Heart right ventricle (tissue), 16 donors: ENCODE measurements at regions of chr10 and their contacts with region 1.

Region 1: GRCh38 chr10:79195091-79195923 is 126.5 kb downstream of the ZMIZ1 start:
- DNase-seq: peak; percentile 86 to 87
- ATAC-seq: peak; percentile 76 to 92 (median 86)
- H3K4me3 ChIP-seq: peak overlapping the region in 1 of 10 donors; percentile 19
- H3K27ac ChIP-seq: peak overlapping the region; percentile 45 to 85 (median 66)
- H3K4me1 ChIP-seq: peaks cover 39 to 69% (median 50%) of the 10 kb centered on the region in 9 donors
- H3K27me3 ChIP-seq: no peaks in the 10 kb centered on the region
- CTCF ChIP-seq: peak; percentile 96 to 98 (median 97)

Region 2: DNA sequence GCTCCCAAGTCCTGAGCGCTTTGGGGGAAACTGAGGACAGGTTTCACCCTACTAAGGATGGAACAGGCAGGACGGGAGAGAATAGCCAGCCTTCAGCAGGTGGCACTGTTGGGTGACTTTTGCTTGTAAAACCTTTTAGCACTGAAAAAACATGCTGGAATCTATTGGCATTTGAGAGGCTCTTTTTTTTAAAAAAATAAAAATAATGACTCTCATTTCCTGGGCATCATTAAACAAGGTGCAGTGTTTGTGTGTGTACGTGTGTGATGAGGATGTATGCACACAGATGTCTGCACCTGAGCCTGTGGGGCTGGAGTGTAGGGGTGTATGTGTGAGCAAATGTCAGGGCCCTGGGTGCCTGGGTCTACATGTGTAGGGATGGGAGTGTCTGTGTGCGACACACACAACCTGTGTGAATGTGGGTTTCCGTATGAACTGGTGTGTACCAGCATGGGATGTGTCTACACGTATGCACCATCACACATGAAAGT is 983.7 kb before region 1 on chr10:
- intact Hi-C with region 1: loop called (anchors 5 to 10 kb)
- DNase-seq: peak in 1 of 2 donors; percentile 39
- ATAC-seq: peak in 5 of 8 donors; percentile 1 to 40 (median 9)
- H3K4me3 ChIP-seq: no peak overlapping the region
- H3K27ac ChIP-seq: peak overlapping the region in 4 of 10 donors; percentile 1 to 56 (median 12)
- H3K4me1 ChIP-seq: peaks cover 20 to 40% (median 25%) of the 10 kb centered on the region in 9 donors
- H3K27me3 ChIP-seq: no peaks in the 10 kb centered on the region
- CTCF ChIP-seq: peak; percentile 19 to 66 (median 51)

Region 3: GRCh38 chr10:78599081-78599853 is 596.0 kb before region 1 on chr10:
- intact Hi-C with region 1: loop called in 1 of 10 experiments (anchors 10 kb)
- DNase-seq: no peak
- ATAC-seq: no peak
- H3K4me3 ChIP-seq: no peak overlapping the region
- H3K27ac ChIP-seq: no peak overlapping the region
- H3K4me1 ChIP-seq: peaks cover 0 to 6% (median 0%) of the 10 kb centered on the region in 9 donors
- H3K27me3 ChIP-seq: peaks cover 0 to 4% (median 0%) of the 10 kb centered on the region in 7 donors
- CTCF ChIP-seq: no peak

Region 4: GRCh38 chr10:78777466-78777865 is 417.8 kb before region 1 on chr10:
- intact Hi-C with region 1: loop called in 1 of 10 experiments (anchors 10 kb)
- DNase-seq: peak; percentile 57 to 73
- ATAC-seq: peak; percentile 74 to 89 (median 83)
- H3K4me3 ChIP-seq: no peak overlapping the region
- H3K27ac ChIP-seq: peak overlapping the region; percentile 20 to 91 (median 78)
- H3K4me1 ChIP-seq: peaks cover 13 to 59% (median 32%) of the 10 kb centered on the region in 9 donors
- H3K27me3 ChIP-seq: no peaks in the 10 kb centered on the region
- CTCF ChIP-seq: peak in 1 of 9 donors; percentile 20

Region 5: GRCh38 chr10:78869508-78870454 is 325.5 kb before region 1 on chr10:
- intact Hi-C with region 1: no loop called
- DNase-seq: no peak
- ATAC-seq: no peak
- H3K4me3 ChIP-seq: no peak overlapping the region
- H3K27ac ChIP-seq: no peak overlapping the region
- H3K4me1 ChIP-seq: peaks cover 0 to 8% (median 0%) of the 10 kb centered on the region in 9 donors
- H3K27me3 ChIP-seq: peaks cover 0 to 15% (median 0%) of the 10 kb centered on the region in 7 donors
- CTCF ChIP-seq: no peak

Region 6: GRCh38 chr10:78931321-78932053 is 263.8 kb before region 1 on chr10:
- intact Hi-C with region 1: loop called in 1 of 10 experiments (anchors 10 kb)
- DNase-seq: peak; percentile 43 to 54
- ATAC-seq: peak; percentile 21 to 85 (median 76)
- H3K4me3 ChIP-seq: no peak overlapping the region
- H3K27ac ChIP-seq: peak overlapping the region in 8 of 10 donors; percentile 28 to 76 (median 57)
- H3K4me1 ChIP-seq: peaks cover 0 to 33% (median 15%) of the 10 kb centered on the region in 9 donors
- H3K27me3 ChIP-seq: no peaks in the 10 kb centered on the region
- CTCF ChIP-seq: no peak

Region 7: DNA sequence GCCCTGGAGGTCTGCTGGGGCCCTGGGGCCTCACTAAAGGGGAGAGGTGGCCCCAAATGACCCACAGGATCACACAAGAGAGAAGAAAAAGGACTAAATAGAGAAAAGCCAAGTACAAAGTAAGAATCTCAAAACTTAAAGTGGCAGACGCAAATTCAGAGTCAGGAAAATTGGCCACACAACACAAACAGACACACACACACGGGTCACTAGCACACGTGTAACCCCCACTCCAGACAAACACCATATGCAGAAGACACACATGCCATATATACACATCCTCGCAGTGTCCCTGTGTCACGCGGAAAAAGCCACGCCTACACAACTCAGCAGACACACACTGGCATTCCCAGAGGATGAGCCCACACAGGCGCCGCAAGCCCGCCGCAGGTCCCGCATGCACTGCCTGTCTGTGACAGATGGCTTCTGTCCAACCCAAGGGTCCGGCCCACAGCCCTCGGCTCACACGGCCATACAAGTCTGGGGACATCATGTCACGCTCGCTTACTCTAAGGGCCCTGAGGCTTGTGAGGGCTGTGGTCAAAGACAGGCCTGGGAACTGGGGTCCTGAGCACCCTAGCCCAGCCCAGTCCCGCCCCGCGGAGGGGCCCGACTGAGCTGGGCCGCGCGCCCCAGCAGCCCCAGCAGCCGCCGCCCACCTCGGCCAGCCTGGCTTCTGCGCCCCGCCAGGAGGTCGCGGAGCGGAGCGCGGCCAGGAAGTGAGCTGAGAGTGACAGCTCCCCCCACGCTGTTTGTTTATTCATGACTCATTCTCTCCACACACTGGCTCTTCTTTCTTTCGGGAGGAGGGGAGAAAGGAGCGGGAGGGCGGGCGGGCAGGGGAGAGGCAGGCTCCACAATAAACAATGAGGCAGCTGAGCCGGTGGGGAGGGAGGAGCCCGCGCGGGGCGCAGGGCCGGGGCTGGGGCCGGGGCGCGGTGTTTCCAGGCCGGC is 222.1 kb before region 1 on chr10:
- intact Hi-C with region 1: loop called in 7 of 10 experiments (anchors 5 to 10 kb)
- DNase-seq: peak; percentile 83 to 88
- ATAC-seq: peak; percentile 64 to 82 (median 75)
- H3K4me3 ChIP-seq: peak overlapping the region; percentile 15 to 60 (median 55)
- H3K27ac ChIP-seq: peak overlapping the region; percentile 94 to 99 (median 96)
- H3K4me1 ChIP-seq: peaks cover 12 to 45% (median 31%) of the 10 kb centered on the region in 9 donors
- H3K27me3 ChIP-seq: no peaks in the 10 kb centered on the region
- CTCF ChIP-seq: no peak

Region 8: GRCh38 chr10:79047875-79048638 is 147.2 kb before region 1 on chr10:
- intact Hi-C with region 1: no loop called
- DNase-seq: no peak
- ATAC-seq: peak in 6 of 8 donors; percentile 18 to 56 (median 44)
- H3K4me3 ChIP-seq: peak overlapping the region in 1 of 10 donors; percentile 24
- H3K27ac ChIP-seq: peak overlapping the region in 3 of 10 donors; percentile 36 to 89 (median 52)
- H3K4me1 ChIP-seq: peaks cover 0 to 37% (median 9%) of the 10 kb centered on the region in 9 donors
- H3K27me3 ChIP-seq: no peaks in the 10 kb centered on the region
- CTCF ChIP-seq: no peak

Region 9: GRCh38 chr10:79142064-79142491 is 53.2 kb before region 1 on chr10:
- intact Hi-C with region 1: no loop called
- DNase-seq: no peak
- ATAC-seq: no peak
- H3K4me3 ChIP-seq: no peak overlapping the region
- H3K27ac ChIP-seq: peak overlapping the region in 9 of 10 donors; percentile 23 to 97 (median 91)
- H3K4me1 ChIP-seq: peaks cover 79 to 100% (median 100%) of the 10 kb centered on the region in 9 donors
- H3K27me3 ChIP-seq: no peaks in the 10 kb centered on the region
- CTCF ChIP-seq: no peak

Region 10: DNA sequence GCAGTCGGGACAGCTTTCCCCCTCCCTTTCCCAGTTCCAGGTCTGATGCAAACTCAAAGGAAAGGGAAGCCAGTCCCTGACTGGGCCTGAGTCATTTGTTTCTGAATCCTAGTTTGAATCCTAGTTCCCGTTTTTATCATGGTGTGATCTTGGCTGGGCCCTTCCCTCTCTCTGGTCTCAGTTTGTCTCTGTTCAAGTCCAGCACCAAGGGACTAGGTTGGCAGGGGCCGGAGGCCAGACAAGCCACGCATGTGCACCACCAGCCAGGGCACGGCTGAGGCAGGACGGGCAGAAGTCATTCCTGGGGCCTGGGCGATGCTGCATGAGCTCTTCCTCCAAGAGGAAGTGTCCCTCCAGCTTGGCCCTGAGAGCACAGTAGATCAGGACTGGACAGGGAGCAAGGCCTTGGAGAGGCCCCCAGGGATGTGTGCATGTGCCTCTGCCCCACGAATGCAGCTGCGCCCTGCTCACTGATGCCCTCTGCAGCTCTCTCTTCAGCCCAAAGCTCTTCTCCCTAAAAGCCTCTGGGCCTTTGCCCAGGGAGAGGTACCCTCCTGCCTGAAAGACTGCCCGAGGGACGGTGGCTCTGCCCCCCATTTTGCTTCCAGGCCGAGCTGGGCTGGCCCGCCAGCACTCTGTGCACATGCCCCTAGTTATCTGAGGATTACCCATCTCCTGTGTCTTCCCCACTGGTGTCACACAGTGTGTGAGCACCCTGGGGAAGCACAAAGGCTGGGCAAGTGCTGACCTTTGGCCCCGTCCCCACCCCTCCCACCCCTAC is 39.8 kb before region 1 on chr10:
- intact Hi-C with region 1: loop called in 6 of 10 experiments (anchors 5 kb)
- DNase-seq: peak; percentile 47 to 57
- ATAC-seq: peak in 3 of 8 donors; percentile 3 to 10 (median 6)
- H3K4me3 ChIP-seq: no peak overlapping the region
- H3K27ac ChIP-seq: peak overlapping the region; percentile 85 to 98 (median 93)
- H3K4me1 ChIP-seq: peaks cover 88 to 100% (median 100%) of the 10 kb centered on the region in 9 donors
- H3K27me3 ChIP-seq: no peaks in the 10 kb centered on the region
- CTCF ChIP-seq: peak in 8 of 9 donors; percentile 8 to 58 (median 34)

Region 11: GRCh38 chr10:79266543-79267312 is 71.4 kb after region 1 on chr10:
- intact Hi-C with region 1: no loop called
- DNase-seq: peak; percentile 61 to 82
- ATAC-seq: peak; percentile 49 to 83 (median 71)
- H3K4me3 ChIP-seq: peak overlapping the region in 4 of 10 donors; percentile 2 to 25 (median 12)
- H3K27ac ChIP-seq: peak overlapping the region; percentile 61 to 91 (median 85)
- H3K4me1 ChIP-seq: peaks cover 52 to 100% (median 94%) of the 10 kb centered on the region in 9 donors
- H3K27me3 ChIP-seq: no peaks in the 10 kb centered on the region
- CTCF ChIP-seq: no peak